Vagina (tissue), 2 donors: ENCODE measurements at regions of chr7 and their contacts with region 1.

Region 1: GRCh38 chr7:8982338-8982992 is 549.1 kb downstream of the NXPH1 start:
- DNase-seq: no peak
- H3K4me3 ChIP-seq: no peak overlapping the region
- H3K27ac ChIP-seq: no peak overlapping the region
- H3K4me1 ChIP-seq: no peaks in the 10 kb centered on the region
- H3K27me3 ChIP-seq: no peaks in the 10 kb centered on the region
- CTCF ChIP-seq: no peak
- POLR2A ChIP-seq: no peak

Region 2: DNA sequence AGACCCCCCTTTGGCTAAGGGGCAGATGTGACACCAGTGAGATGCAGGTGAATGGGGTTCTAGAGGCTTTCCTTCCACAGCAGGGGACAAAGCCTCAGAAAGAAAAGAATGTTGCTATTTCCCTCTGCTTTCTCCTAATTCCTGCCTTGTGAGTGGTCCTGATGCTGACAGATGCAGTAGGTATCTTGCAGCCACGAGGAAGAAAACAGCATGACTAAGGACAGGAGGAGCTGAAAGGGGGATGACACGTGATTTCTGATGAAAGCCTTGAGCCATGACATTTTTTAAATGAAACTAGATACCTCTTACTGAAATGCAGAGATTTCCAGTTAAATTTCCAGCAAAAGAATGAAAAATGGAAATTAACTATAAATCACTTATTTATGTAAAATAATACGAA is 1707.7 kb before region 1 on chr7:
- intact Hi-C with region 1: loop called (anchors 10 kb)
- DNase-seq: no peak
- H3K4me3 ChIP-seq: no peak overlapping the region
- H3K27ac ChIP-seq: no peak overlapping the region
- H3K4me1 ChIP-seq: no peaks in the 10 kb centered on the region
- H3K27me3 ChIP-seq: no peaks in the 10 kb centered on the region
- CTCF ChIP-seq: no peak
- POLR2A ChIP-seq: no peak

Region 3: GRCh38 chr7:7566651-7567611 is 1415.5 kb before region 1 on chr7 and contains the start of gene MIOS:
- intact Hi-C with region 1: no loop called
- DNase-seq: no peak
- H3K4me3 ChIP-seq: peak within 1 kb of the TSS; percentile 77 to 81
- H3K27ac ChIP-seq: peak within 1 kb of the TSS; percentile 94
- H3K4me1 ChIP-seq: peaks cover 51% of the 10 kb centered on the region
- H3K27me3 ChIP-seq: no peaks in the 10 kb centered on the region
- CTCF ChIP-seq: no peak
- POLR2A ChIP-seq: peak in 1 of 2 donors; percentile 58
- total RNA-seq, gene MIOS: 50.1 TPM